AG04449 (cell line): ENCODE measurements at regions of chr12 and their contacts with region 1.

Region 1: GRCh38 chr12:56601503-56601902 is 28.6 kb downstream of the BAZ2A start:
- DNase-seq: no peak
- H3K4me3 ChIP-seq: no peak overlapping the region
- CTCF ChIP-seq: peak; percentile 16

Region 2: DNA sequence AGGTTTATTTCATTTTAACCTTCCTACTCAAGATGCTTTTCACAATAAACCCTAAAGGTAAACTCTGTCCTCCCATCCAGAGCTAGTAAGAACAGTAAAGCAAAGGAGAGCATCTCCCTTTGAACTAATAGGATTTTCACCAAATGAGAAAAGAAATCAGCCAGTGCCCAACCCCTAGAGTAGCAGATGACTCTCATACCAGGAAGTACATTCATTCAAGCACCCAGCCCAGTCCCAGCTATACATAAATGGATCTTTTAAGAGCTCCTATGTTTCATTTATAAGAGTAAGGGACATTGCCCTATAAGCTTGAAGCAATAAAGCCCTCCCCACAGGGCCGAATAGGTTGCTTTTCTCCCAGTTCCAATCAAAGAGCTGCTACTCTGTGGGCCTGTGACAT is 21.0 kb after region 1 on chr12:
- CTCF ChIA-PET with region 1: interaction called, 10 read pairs
- POLR2A ChIA-PET with region 1: no interaction called
- DNase-seq: no peak
- H3K4me3 ChIP-seq: no peak overlapping the region
- CTCF ChIP-seq: no peak